Natural killer cell (primary cell): ENCODE measurements at regions of chr17 and their contacts with region 1.

Region 1: GRCh38 chr17:35486920-35487732 is 38.6 kb upstream of the SLFN13 start:
- DNase-seq: peak; percentile 72 to 87
- ATAC-seq: peak; percentile 50 to 77 (median 72)
- H3K4me3 ChIP-seq: peak overlapping the region; percentile 86
- H3K4me3 Mint-ChIP-seq: peak overlapping the region; percentile 97
- H3K27ac ChIP-seq: peak overlapping the region; percentile 95
- H3K27ac Mint-ChIP-seq: peak overlapping the region; percentile 94 to 97
- H3K4me1 ChIP-seq: peaks cover 35% of the 10 kb centered on the region
- H3K4me1 Mint-ChIP-seq: peaks cover 85 to 88% of the 10 kb centered on the region in 2 donors
- H3K27me3 ChIP-seq: no peaks in the 10 kb centered on the region
- H3K27me3 Mint-ChIP-seq: no peaks in the 10 kb centered on the region
- CTCF ChIP-seq: no peak

Region 2: GRCh38 chr17:35373534-35373983 is 113.6 kb before region 1 on chr17 and contains the start of gene SLFN11:
- intact Hi-C with region 1: loop called (anchors 1 kb)
- DNase-seq: peak; percentile 62 to 93
- ATAC-seq: peak; percentile 78 to 86 (median 83)
- H3K4me3 ChIP-seq: peak within 1 kb of the TSS; percentile 67
- H3K4me3 Mint-ChIP-seq: peak within 1 kb of the TSS; percentile 98
- H3K27ac ChIP-seq: peak within 1 kb of the TSS; percentile 88
- H3K27ac Mint-ChIP-seq: peak within 1 kb of the TSS; percentile 95 to 97
- H3K4me1 ChIP-seq: peaks cover 10% of the 10 kb centered on the region
- H3K4me1 Mint-ChIP-seq: peaks cover 23 to 37% of the 10 kb centered on the region in 2 donors
- H3K27me3 ChIP-seq: no peaks in the 10 kb centered on the region
- H3K27me3 Mint-ChIP-seq: no peaks in the 10 kb centered on the region
- CTCF ChIP-seq: no peak
- total RNA-seq, gene SLFN11: 22.9 to 31.8 (median 26.8) TPM

Region 3: GRCh38 chr17:35448214-35448898 is 38.8 kb before region 1 on chr17 and contains the start of gene SLFN13:
- intact Hi-C with region 1: loop called (anchors 1 kb)
- DNase-seq: peak; percentile 80 to 91
- ATAC-seq: peak; percentile 79 to 91 (median 86)
- H3K4me3 ChIP-seq: peak within 1 kb of the TSS; percentile 91
- H3K4me3 Mint-ChIP-seq: peak within 1 kb of the TSS; percentile 98
- H3K27ac ChIP-seq: peak within 1 kb of the TSS; percentile 97
- H3K27ac Mint-ChIP-seq: peak within 1 kb of the TSS; percentile 96 to 98
- H3K4me1 ChIP-seq: peaks cover 28% of the 10 kb centered on the region
- H3K4me1 Mint-ChIP-seq: peaks cover 44 to 46% of the 10 kb centered on the region in 2 donors
- H3K27me3 ChIP-seq: no peaks in the 10 kb centered on the region
- H3K27me3 Mint-ChIP-seq: no peaks in the 10 kb centered on the region
- CTCF ChIP-seq: no peak
- total RNA-seq, gene SLFN13: 85.9 to 182 (median 129) TPM

Region 4: GRCh38 chr17:35529866-35530265 is 42.7 kb after region 1 on chr17:
- intact Hi-C with region 1: loop called (anchors 2 kb)
- DNase-seq: peak in 1 of 2 donors; percentile 66
- ATAC-seq: peak; percentile 57 to 85 (median 79)
- H3K4me3 ChIP-seq: no peak overlapping the region
- H3K4me3 Mint-ChIP-seq: peak overlapping the region; percentile 88
- H3K27ac ChIP-seq: peak overlapping the region; percentile 75
- H3K27ac Mint-ChIP-seq: peak overlapping the region; percentile 88 to 95
- H3K4me1 ChIP-seq: peaks cover 29% of the 10 kb centered on the region
- H3K4me1 Mint-ChIP-seq: peaks cover 70 to 82% of the 10 kb centered on the region in 2 donors
- H3K27me3 ChIP-seq: no peaks in the 10 kb centered on the region
- H3K27me3 Mint-ChIP-seq: no peaks in the 10 kb centered on the region
- CTCF ChIP-seq: no peak

Region 5: DNA sequence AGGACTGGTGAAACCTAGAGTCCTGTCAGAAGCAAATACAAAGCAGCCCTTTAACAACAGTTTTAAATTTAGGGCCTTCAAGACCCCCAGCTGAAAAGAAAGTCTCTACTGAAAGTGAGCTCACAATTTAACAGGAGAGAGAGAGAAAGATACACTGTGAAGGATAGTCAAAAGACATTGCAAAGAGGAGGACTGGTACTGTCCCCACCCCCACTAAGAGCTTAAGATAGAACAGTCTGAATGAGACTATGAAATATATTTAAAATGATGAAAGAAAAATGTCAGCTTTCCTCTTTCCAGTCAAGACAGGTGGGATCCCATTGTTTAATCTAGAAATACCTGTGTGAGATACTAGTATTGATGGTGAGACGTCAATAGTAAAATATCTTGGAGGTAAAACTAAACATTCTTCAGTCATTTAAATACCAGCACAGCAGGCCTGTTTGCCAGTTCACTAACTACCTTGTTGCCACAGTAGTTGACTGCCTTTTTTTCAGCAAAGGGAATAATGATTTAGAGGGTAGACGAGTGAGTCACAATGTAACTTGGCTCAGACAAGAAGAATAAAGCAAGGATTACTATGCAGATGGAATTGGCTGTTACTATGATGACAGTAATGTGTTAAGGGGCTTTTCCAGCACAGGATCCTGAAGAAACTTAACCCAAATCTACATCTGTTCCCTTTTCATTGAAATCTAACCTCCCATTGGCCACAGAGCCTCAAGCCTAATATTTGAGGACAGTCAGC is 197.1 kb after region 1 on chr17:
- intact Hi-C with region 1: no loop called
- DNase-seq: no peak
- ATAC-seq: no peak
- H3K4me3 ChIP-seq: no peak overlapping the region
- H3K4me3 Mint-ChIP-seq: no peak overlapping the region
- H3K27ac ChIP-seq: no peak overlapping the region
- H3K27ac Mint-ChIP-seq: no peak overlapping the region
- H3K4me1 ChIP-seq: no peaks in the 10 kb centered on the region
- H3K4me1 Mint-ChIP-seq: peaks cover 0 to 8% of the 10 kb centered on the region in 2 donors
- H3K27me3 ChIP-seq: no peaks in the 10 kb centered on the region
- H3K27me3 Mint-ChIP-seq: no peaks in the 10 kb centered on the region
- CTCF ChIP-seq: no peak